ENCODE measurements at regions of chr5 and their contacts with region 1.

Region 1: GRCh38 chr5:134527146-134527960 is 1.9 kb downstream of the JADE2 start:
- DNase-seq: peak; percentile 94
- ATAC-seq: peak; percentile 66
- H3K4me3 Mint-ChIP-seq: peak overlapping the region; percentile 85
- H3K27ac Mint-ChIP-seq: peak overlapping the region; percentile 97
- H3K4me1 Mint-ChIP-seq: peaks cover 52% of the 10 kb centered on the region
- H3K27me3 Mint-ChIP-seq: no peaks in the 10 kb centered on the region
- CTCF ChIP-seq: peak; percentile 74

Region 2: DNA sequence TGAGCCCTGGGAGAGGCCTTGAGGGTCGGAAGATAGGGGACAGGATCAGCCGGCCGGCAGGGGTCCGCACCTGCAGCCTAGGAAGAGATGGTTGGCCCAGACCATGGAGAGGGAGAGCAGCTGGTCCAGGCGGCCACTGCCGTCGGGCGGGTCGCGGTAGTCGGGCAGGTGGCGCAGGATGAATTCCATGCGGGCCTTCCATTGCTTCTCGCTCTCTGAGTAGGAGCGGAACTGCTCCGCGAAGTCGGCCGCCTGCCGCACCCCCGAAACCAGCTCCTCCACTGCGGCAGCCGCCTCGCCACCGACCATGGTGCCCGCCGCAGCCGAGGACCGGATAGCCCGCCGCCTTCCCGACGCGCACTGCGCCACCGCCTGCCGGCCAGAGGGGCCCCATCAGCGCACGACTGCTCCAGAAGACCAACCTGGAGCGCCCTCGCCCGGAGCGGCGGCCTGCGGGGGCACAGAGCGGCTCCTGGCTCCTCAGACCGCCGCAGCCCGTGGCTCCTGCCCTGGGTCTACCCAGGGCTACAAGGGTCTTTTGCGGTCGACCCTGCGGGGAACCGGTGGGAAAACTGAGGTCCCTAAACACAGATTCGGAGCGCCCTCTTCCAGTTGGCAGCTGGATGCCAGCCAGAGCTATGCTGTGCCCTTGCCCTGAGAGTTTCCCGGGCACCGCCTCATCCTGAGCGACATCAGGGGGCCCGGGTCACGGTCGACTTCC is 115.6 kb before region 1 on chr5 and contains the start of gene CDKN2AIPNL:
- CTCF ChIA-PET with region 1: interaction called, 12 read pairs
- POLR2A ChIA-PET with region 1: interaction called, 10 read pairs
- DNase-seq: peak; percentile 92
- ATAC-seq: peak; percentile 98
- H3K4me3 Mint-ChIP-seq: peak within 1 kb of the TSS; percentile 97
- H3K27ac Mint-ChIP-seq: peak within 1 kb of the TSS; percentile 76
- H3K4me1 Mint-ChIP-seq: peaks cover 42% of the 10 kb centered on the region
- H3K27me3 Mint-ChIP-seq: no peaks in the 10 kb centered on the region
- CTCF ChIP-seq: no peak
- total RNA-seq, gene CDKN2AIPNL: 54.3 to 60.7 TPM (median 59.8 TPM) in 3 replicates

Region 3: DNA sequence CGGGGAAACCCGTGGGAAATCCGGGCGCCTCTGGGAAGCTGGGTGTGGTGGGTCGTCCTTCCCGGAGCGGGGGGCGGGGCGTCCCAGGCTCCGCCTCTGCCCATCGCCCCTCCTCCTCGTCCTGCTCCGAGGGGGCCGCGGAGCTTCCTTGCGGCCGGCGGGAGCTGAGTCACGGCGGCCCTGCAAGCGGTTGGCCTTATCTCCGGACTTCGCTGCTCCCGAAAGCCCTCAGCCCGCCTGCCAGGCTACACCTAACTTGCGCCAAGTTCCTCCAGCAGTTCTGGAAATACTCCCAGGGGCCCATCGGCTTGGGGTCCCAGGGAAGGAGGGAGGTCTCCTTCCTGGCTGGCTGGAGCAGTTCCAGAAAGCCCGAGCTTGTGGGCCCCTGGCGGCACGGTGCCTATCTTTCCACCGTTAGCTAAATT is 61.5 kb before region 1 on chr5:
- CTCF ChIA-PET with region 1: interaction called, 54 read pairs
- POLR2A ChIA-PET with region 1: interaction called, 47 read pairs
- DNase-seq: peak; percentile 89
- ATAC-seq: peak; percentile 77
- H3K4me3 Mint-ChIP-seq: peak overlapping the region; percentile 86
- H3K27ac Mint-ChIP-seq: peak overlapping the region; percentile 94
- H3K4me1 Mint-ChIP-seq: peaks cover 20% of the 10 kb centered on the region
- H3K27me3 Mint-ChIP-seq: no peaks in the 10 kb centered on the region
- CTCF ChIP-seq: no peak

Region 4: DNA sequence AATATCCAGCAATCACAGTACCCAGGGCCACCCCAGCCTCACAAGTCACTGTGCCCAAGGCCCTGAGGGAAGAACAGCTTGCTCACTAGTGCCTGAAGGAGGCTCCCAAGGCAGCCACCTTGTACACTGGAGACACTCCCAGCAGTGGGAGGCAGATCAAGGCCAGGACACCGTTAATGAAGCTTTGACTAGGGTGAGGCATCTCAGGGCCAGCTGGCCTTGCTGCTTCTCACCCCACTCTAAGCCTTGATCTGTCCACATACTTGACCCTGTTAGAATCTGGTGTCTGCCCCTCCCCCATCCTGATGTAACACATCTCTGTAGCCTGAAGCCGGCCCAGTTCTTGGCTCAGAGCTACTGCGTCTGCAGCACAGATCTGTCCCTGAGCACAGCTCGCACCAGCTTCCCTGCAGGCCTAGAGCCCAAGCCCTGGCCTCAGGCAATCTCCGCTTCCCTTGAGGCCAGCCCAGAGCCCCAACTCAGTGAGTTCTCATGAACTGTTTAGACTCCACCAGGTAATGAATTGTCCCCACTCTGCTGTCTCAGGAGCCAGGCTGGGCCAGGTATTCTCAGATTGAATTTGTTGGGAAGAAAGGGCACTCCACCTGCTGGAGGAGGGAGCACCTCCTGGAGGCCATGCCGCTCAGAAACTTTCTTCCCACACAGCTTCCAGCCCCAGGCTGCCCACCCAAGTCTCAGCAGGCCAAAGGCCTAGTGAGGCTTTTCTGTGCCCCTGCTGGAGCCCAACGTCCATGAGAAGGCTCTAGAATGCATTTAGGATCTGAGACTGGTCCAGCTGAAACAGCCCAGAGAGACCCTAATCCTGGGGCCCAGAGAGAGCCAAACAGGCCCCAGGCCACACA is 15.3 kb before region 1 on chr5:
- CTCF ChIA-PET with region 1: interaction called, 21 read pairs
- POLR2A ChIA-PET with region 1: interaction called, 58 read pairs
- DNase-seq: peak; percentile 76
- ATAC-seq: peak; percentile 68
- H3K4me3 Mint-ChIP-seq: peak overlapping the region; percentile 30
- H3K27ac Mint-ChIP-seq: peak overlapping the region; percentile 97
- H3K4me1 Mint-ChIP-seq: peaks cover 51% of the 10 kb centered on the region
- H3K27me3 Mint-ChIP-seq: no peaks in the 10 kb centered on the region
- CTCF ChIP-seq: no peak

Region 5: DNA sequence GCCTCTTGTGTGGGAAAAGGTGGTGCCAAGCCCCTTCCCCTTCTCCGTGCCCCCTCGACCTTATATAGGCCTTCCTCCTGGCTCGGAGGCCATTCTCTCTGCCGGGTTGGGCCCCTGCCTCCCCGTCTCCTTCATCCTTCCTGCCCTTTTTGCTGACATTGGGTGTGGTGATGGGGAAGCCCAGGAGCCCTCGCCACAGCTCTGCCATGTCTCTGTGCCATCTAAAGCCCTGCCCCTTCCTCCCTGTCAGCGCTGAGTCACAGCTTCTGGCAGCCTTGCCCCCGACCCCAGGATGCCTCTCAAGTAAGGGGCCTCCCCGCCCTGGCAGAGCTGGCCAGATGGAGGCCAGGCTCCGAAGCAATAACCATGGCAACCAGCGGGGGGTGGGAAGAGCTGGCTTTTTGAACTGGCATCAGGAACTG is 28.5 kb after region 1 on chr5:
- CTCF ChIA-PET with region 1: interaction called, 18 read pairs
- POLR2A ChIA-PET with region 1: interaction called, 4 read pairs
- DNase-seq: peak; percentile 49
- ATAC-seq: peak; percentile 62
- H3K4me3 Mint-ChIP-seq: no peak overlapping the region
- H3K27ac Mint-ChIP-seq: 0 out of 2 replicates have a peak overlapping the region, but pooled peaks have one; percentile 88
- H3K4me1 Mint-ChIP-seq: peaks cover 3% of the 10 kb centered on the region; the same call in 1 of the 2 replicates
- H3K27me3 Mint-ChIP-seq: no peaks in the 10 kb centered on the region
- CTCF ChIP-seq: no peak